ENCODE measurements at regions of chr9 and their contacts with region 1.

Region 1: DNA sequence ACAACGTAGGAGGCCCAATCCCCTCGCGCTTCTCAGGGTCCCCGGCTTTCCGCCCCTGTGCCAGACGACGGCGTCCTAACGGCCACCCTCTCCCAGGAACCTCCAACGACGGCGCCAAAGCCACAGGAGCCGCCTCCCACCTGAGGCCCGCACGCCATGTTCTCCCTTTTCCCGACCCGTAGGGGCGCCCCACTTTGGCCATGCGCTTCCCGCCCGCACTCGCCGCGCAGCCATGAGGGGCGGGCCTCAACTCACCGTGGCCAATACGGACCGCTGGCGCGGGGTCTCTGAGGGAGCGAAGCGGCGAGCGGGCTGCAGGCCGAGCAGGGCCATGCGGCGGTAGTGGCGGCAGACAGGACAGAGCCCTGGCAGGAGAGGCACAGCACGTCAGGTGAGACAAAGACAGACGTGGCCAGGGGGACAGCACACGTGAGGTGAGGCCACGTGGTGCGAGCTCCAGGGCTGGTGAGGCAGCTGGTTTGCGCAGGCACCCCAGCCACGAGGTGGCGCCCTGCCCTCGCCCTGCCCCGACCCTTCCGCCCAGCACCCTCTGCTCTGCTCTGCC is 1005.5 kb upstream of the PTPRD start:
- DNase-seq: no peak
- ATAC-seq: peak; percentile 49; the same call in 1 of the 3 replicates
- H3K4me3 ChIP-seq: no peak overlapping the region
- H3K27ac ChIP-seq: no peak overlapping the region
- H3K4me1 ChIP-seq: no peaks in the 10 kb centered on the region
- H3K27me3 ChIP-seq: no peaks in the 10 kb centered on the region
- CTCF ChIP-seq: peak in 1 of 3 experiments; percentile 10; a peak in 1 of 6 replicates
- EP300 ChIP-seq: no peak
- POLR2A ChIP-seq: no peak
- RAD21 ChIP-seq: no peak

Region 2: GRCh38 chr9:12060811-12061210 is 442.5 kb after region 1 on chr9:
- CTCF ChIA-PET with region 1: no interaction called
- POLR2A ChIA-PET with region 1: no interaction called
- RAD21 ChIA-PET with region 1: no interaction called
- SMC1A ChIA-PET with region 1: no interaction called
- in situ Hi-C with region 1: no loop called
- intact Hi-C with region 1: no loop called
- DNase-seq: no peak
- ATAC-seq: no peak
- H3K4me3 ChIP-seq: no peak overlapping the region
- H3K27ac ChIP-seq: no peak overlapping the region
- H3K4me1 ChIP-seq: no peaks in the 10 kb centered on the region
- H3K27me3 ChIP-seq: no peaks in the 10 kb centered on the region
- CTCF ChIP-seq: no peak
- EP300 ChIP-seq: no peak
- POLR2A ChIP-seq: no peak
- RAD21 ChIP-seq: no peak

Region 3: DNA sequence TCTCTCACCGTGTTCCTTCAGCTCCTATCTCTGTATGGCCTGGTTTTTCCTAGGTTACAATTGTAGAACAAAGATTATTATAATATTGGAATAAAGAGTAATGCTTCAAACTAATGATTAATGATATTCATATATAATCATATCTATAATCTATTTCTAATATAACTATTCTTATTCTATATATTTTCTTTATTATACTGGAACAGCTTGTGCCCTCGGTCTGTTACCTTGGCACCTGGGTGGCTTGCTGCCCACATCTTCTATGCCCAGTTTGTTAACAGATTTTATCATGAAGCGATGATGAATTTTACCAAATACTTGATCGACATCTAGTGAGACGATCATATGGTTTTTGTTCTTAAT is 711.3 kb after region 1 on chr9:
- CTCF ChIA-PET with region 1: interaction called, 8 read pairs
- POLR2A ChIA-PET with region 1: no interaction called
- RAD21 ChIA-PET with region 1: interaction called, 4 read pairs
- SMC1A ChIA-PET with region 1: no interaction called
- in situ Hi-C with region 1: no loop called
- intact Hi-C with region 1: loop called (anchors 1 kb)
- DNase-seq: no peak
- ATAC-seq: no peak
- H3K4me3 ChIP-seq: no peak overlapping the region
- H3K27ac ChIP-seq: no peak overlapping the region
- H3K4me1 ChIP-seq: no peaks in the 10 kb centered on the region
- H3K27me3 ChIP-seq: no peaks in the 10 kb centered on the region
- CTCF ChIP-seq: no peak
- EP300 ChIP-seq: no peak
- POLR2A ChIP-seq: no peak
- RAD21 ChIP-seq: no peak

Measured in GM12878 (cell line).